A673 (cell line): ENCODE measurements at regions of chr13 and their contacts with region 1.

Region 1: GRCh38 chr13:27251166-27252091 is at the start of gene RPL21:
- DNase-seq: peak; percentile 97
- H3K4me3 ChIP-seq: peak within 1 kb of the TSS; percentile 82
- H3K27ac ChIP-seq: peak within 1 kb of the TSS; percentile 96
- H3K4me1 ChIP-seq: no peaks in the 10 kb centered on the region
- H3K27me3 ChIP-seq: no peaks in the 10 kb centered on the region
- CTCF ChIP-seq: no peak
- total RNA-seq, gene RPL21: 906 and 986 TPM in 2 replicates

Region 2: GRCh38 chr13:27171827-27172494 is 79.5 kb before region 1 on chr13:
- CTCF ChIA-PET with region 1: no interaction called
- POLR2A ChIA-PET with region 1: no interaction called
- intact Hi-C with region 1: loop called (anchors 5 kb)
- DNase-seq: peak; percentile 94
- H3K4me3 ChIP-seq: peak overlapping the region; percentile 87
- H3K27ac ChIP-seq: peak overlapping the region; percentile 75
- H3K4me1 ChIP-seq: peaks cover 21% of the 10 kb centered on the region
- H3K27me3 ChIP-seq: no peaks in the 10 kb centered on the region
- CTCF ChIP-seq: no peak

Region 3: DNA sequence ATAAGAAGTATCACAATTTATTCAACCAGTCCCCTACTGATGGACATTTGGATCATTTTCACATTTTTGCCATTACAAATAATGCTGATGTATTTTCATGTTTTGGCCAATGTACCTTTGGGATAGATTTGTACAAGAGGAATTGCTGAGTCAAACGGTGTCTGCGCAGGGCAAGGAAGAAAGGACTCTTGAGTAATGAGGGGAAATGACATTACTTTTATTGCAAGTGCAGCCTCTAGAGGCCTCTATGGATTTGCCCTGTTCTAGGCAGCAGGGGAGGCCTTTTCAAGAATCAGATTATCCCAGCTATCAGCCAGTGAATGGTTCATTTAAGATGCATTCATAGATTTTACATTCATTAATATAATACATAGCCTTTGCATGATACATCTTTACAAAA is 140.0 kb after region 1 on chr13:
- CTCF ChIA-PET with region 1: no interaction called
- POLR2A ChIA-PET with region 1: no interaction called
- intact Hi-C with region 1: no loop called
- DNase-seq: no peak
- H3K4me3 ChIP-seq: no peak overlapping the region
- H3K27ac ChIP-seq: no peak overlapping the region
- H3K4me1 ChIP-seq: no peaks in the 10 kb centered on the region
- H3K27me3 ChIP-seq: peaks cover 15% of the 10 kb centered on the region
- CTCF ChIP-seq: no peak

Region 4: GRCh38 chr13:27712421-27712820 is 461.0 kb after region 1 on chr13:
- CTCF ChIA-PET with region 1: no interaction called
- POLR2A ChIA-PET with region 1: no interaction called
- intact Hi-C with region 1: no loop called
- DNase-seq: peak; percentile 30
- H3K4me3 ChIP-seq: no peak overlapping the region
- H3K27ac ChIP-seq: no peak overlapping the region
- H3K4me1 ChIP-seq: no peaks in the 10 kb centered on the region
- H3K27me3 ChIP-seq: peaks cover 35% of the 10 kb centered on the region
- CTCF ChIP-seq: peak; percentile 46